Tibial artery (tissue), 4 donors: ENCODE measurements at regions of chr17 and their contacts with region 1.

Region 1: DNA sequence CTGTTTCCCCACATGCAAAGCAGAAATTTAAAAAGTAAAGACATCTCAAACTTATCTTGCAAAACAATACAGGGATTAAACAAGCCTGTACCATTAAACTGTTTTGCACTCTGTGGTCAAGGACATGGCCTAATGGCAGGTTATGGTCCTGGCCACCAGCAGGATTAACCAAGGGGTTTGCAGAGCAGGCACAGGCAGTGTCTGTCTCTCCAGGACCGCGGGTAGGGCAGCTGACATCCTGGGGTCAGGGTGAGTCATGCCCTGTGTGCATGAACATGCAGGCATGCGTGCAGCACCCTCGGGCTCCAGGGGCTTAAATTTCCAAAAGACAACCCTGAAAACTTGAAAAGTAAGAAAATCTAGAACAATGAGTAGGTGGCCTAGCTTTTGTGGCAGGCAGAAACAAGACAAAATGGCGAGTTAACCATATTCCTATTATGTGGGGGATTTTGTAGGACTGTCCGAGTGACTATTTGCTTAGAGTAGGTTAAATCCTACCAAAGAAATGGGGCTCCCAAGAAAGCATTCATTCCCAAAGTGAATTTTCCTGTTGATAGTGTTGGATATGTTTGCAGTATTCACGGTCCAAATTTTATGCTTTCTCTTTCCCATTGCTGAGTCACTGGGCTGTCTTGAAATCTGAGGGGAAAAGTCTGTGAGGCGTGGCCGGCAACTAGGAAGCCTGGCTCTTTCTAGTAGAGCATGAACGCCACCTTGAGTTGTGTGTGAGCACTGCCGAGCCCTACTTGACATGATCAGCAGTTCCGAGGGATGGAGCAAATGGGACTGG is 158.4 kb upstream of the FAM20A start:
- DNase-seq: peak; percentile 92 to 95
- H3K4me3 ChIP-seq: peak overlapping the region; percentile 42 to 50
- H3K27ac ChIP-seq: peak overlapping the region; percentile 67 to 69
- H3K4me1 ChIP-seq: peaks cover 0 to 8% (median 6%) of the 10 kb centered on the region in 4 donors
- H3K27me3 ChIP-seq: no peaks in the 10 kb centered on the region
- CTCF ChIP-seq: peak; percentile 90

Region 2: DNA sequence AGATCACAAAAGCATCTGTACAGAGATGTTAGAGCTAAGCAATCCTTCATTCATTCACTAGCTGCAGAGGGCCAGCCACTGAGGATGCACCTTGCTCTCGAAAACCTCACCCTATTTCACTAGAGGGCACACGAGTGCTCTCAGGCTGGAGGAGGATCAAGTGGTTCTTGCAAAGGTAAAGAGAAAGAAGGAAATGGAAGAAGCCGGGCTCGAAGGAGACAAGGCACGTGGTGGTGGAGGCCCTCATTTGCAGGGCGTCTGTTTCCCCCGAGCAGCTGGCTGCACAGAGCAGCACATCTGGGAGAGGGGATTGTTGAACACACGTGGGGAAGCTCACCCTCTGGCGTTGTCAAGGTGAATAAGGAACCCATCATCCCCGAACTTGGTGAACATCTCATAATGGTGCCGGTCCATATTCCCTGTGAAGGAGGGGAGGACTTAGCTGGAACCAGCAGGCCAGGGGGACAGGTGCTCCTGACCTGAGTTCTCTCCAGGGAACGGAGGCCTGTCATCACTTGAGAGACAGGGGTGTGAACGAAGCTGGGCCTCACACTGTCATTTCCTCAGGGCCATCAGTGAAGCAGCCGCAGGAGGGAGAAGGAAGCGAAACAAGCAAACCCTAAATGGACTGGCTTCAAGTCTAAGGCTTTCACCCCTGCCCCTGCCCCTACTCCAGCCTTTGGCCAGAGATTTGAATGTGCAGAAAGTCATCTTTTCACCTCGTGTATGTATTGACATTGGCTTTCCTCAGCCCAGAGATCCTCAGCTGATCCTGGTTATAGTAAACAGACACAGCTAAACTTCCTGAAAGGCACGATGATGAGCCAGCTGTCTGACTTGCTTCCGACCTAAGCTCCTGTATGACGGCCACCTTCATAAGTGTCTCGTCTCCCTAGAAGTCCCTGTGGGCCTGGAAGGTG is 219.7 kb before region 1 on chr17:
- intact Hi-C with region 1: loop called (anchors 10 kb)
- DNase-seq: no peak
- H3K4me3 ChIP-seq: no peak overlapping the region
- H3K27ac ChIP-seq: no peak overlapping the region
- H3K4me1 ChIP-seq: no peaks in the 10 kb centered on the region
- H3K27me3 ChIP-seq: no peaks in the 10 kb centered on the region
- CTCF ChIP-seq: no peak

Region 3: GRCh38 chr17:68878226-68878885 is 118.8 kb after region 1 on chr17:
- intact Hi-C with region 1: no loop called
- DNase-seq: no peak
- H3K4me3 ChIP-seq: no peak overlapping the region
- H3K27ac ChIP-seq: no peak overlapping the region
- H3K4me1 ChIP-seq: no peaks in the 10 kb centered on the region
- H3K27me3 ChIP-seq: no peaks in the 10 kb centered on the region
- CTCF ChIP-seq: no peak